CD8-positive, alpha-beta T cell (primary cell): ENCODE measurements at regions of chrX and their contacts with region 1.

Region 1: DNA sequence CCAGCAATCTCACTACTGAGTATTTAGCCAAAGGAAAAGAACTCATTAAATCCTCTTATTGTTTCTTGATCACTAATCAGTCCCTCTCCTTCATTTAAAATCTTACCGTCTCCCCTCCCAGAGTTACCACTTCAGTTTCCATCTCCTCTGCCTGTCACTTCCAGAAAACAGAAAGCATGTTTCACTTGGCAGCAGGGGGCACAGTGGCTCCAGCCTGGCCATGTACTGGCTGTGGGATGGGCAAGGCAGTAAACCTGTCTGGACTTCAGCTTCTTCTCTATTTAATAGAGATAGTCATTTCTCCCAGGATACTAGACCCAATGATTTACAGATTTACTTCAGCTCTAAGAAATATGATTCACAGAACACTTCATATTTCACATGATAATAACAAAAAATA is 63.2 kb downstream of the CD40LG start:
- DNase-seq: peak in 3 of 9 experiments; percentile 15 to 32 (median 23)
- ATAC-seq: no peak
- H3K4me3 ChIP-seq: no peak overlapping the region
- H3K4me3 Mint-ChIP-seq: no peak overlapping the region
- H3K27ac ChIP-seq: no peak overlapping the region
- H3K27ac Mint-ChIP-seq: peak overlapping the region; percentile 90
- H3K4me1 ChIP-seq: peaks cover 25% of the 10 kb centered on the region
- H3K4me1 Mint-ChIP-seq: peaks cover 40% of the 10 kb centered on the region
- H3K27me3 ChIP-seq: no peaks in the 10 kb centered on the region
- H3K27me3 Mint-ChIP-seq: no peaks in the 10 kb centered on the region
- CTCF ChIP-seq: no peak

Region 2: GRCh38 chrX:136488706-136489105 is 222.4 kb before region 1 on chrX:
- CTCF ChIA-PET with region 1: no interaction called
- POLR2A ChIA-PET with region 1: no interaction called
- intact Hi-C with region 1: no loop called
- DNase-seq: no peak
- ATAC-seq: no peak
- H3K4me3 ChIP-seq: no peak overlapping the region
- H3K4me3 Mint-ChIP-seq: no peak overlapping the region
- H3K27ac ChIP-seq: no peak overlapping the region
- H3K27ac Mint-ChIP-seq: no peak overlapping the region
- H3K4me1 ChIP-seq: no peaks in the 10 kb centered on the region
- H3K4me1 Mint-ChIP-seq: no peaks in the 10 kb centered on the region
- H3K27me3 ChIP-seq: peaks cover 0 to 3% of the 10 kb centered on the region in 2 experiments
- H3K27me3 Mint-ChIP-seq: peaks cover 29% of the 10 kb centered on the region
- CTCF ChIP-seq: no peak

Region 3: GRCh38 chrX:136687457-136687856 is 23.7 kb before region 1 on chrX:
- CTCF ChIA-PET with region 1: no interaction called
- POLR2A ChIA-PET with region 1: no interaction called
- intact Hi-C with region 1: no loop called
- DNase-seq: peak in 3 of 9 experiments; percentile 28 to 79 (median 55)
- ATAC-seq: peak; percentile 81
- H3K4me3 ChIP-seq: no peak overlapping the region
- H3K4me3 Mint-ChIP-seq: peak overlapping the region; percentile 20
- H3K27ac ChIP-seq: peak overlapping the region; percentile 24 to 37
- H3K27ac Mint-ChIP-seq: peak overlapping the region; percentile 93
- H3K4me1 ChIP-seq: peaks cover 62% of the 10 kb centered on the region
- H3K4me1 Mint-ChIP-seq: peaks cover 55% of the 10 kb centered on the region
- H3K27me3 ChIP-seq: no peaks in the 10 kb centered on the region
- H3K27me3 Mint-ChIP-seq: no peaks in the 10 kb centered on the region
- CTCF ChIP-seq: no peak

Region 4: DNA sequence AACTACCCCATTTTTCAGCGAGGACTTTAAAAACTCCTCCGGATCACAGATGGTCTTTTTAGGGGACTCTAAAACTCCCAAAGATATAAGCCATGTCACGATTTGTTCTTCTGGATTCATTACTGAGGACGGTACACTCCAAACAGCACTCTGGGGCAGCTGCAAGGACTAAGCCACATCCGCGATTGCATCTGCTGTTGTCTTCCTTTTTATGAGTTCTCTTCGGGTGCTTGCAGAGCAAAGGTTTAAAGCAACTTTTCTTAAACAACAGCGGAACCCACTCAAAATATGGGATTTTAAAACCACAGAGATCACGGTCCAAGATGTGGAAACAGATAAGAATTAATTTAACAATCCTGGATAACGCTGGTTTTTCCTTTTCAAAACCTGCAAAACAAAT is 69.6 kb after region 1 on chrX and contains the start of gene ARHGEF6:
- CTCF ChIA-PET with region 1: no interaction called
- POLR2A ChIA-PET with region 1: no interaction called
- intact Hi-C with region 1: loop called in 1 of 2 experiments (anchors 2 kb)
- DNase-seq: peak in 7 of 9 experiments; percentile 0 to 65 (median 36)
- ATAC-seq: peak; percentile 58
- H3K4me3 ChIP-seq: peak within 1 kb of the TSS; percentile 67
- H3K4me3 Mint-ChIP-seq: peak within 1 kb of the TSS; percentile 93
- H3K27ac ChIP-seq: peak within 1 kb of the TSS; percentile 60 to 80
- H3K27ac Mint-ChIP-seq: peak within 1 kb of the TSS; percentile 96
- H3K4me1 ChIP-seq: peaks cover 44% of the 10 kb centered on the region
- H3K4me1 Mint-ChIP-seq: peaks cover 68% of the 10 kb centered on the region
- H3K27me3 ChIP-seq: no peaks in the 10 kb centered on the region
- H3K27me3 Mint-ChIP-seq: no peaks in the 10 kb centered on the region
- CTCF ChIP-seq: no peak
- total RNA-seq, gene ARHGEF6: 32.2 to 33.2 TPM